ENCODE measurements at regions of chr7 and their contacts with region 1.

Region 1: GRCh38 chr7:14457568-14458453 is 444.7 kb downstream of the DGKB start:
- DNase-seq: peak; percentile 17 to 27
- ATAC-seq: peak in 1 of 2 donors; percentile 47
- H3K4me3 ChIP-seq: peak overlapping the region in 1 of 4 donors; percentile 26
- H3K27ac ChIP-seq: no peak overlapping the region
- H3K4me1 ChIP-seq: no peaks in the 10 kb centered on the region
- H3K27me3 ChIP-seq: no peaks in the 10 kb centered on the region
- CTCF ChIP-seq: peak; percentile 39 to 84 (median 58)
- POLR2A ChIP-seq: no peak

Region 2: GRCh38 chr7:12638851-12639467 is 1818.9 kb before region 1 on chr7:
- in situ Hi-C with region 1: loop called in 2 of 4 experiments (anchors 25 kb)
- intact Hi-C with region 1: no loop called
- DNase-seq: no peak
- ATAC-seq: no peak
- H3K4me3 ChIP-seq: no peak overlapping the region
- H3K27ac ChIP-seq: no peak overlapping the region
- H3K4me1 ChIP-seq: no peaks in the 10 kb centered on the region
- H3K27me3 ChIP-seq: no peaks in the 10 kb centered on the region
- CTCF ChIP-seq: peak; percentile 17 to 68 (median 45)
- POLR2A ChIP-seq: no peak